Heart right ventricle (tissue), 16 donors: ENCODE measurements at regions of chr7 and their contacts with region 1.

Region 1: DNA sequence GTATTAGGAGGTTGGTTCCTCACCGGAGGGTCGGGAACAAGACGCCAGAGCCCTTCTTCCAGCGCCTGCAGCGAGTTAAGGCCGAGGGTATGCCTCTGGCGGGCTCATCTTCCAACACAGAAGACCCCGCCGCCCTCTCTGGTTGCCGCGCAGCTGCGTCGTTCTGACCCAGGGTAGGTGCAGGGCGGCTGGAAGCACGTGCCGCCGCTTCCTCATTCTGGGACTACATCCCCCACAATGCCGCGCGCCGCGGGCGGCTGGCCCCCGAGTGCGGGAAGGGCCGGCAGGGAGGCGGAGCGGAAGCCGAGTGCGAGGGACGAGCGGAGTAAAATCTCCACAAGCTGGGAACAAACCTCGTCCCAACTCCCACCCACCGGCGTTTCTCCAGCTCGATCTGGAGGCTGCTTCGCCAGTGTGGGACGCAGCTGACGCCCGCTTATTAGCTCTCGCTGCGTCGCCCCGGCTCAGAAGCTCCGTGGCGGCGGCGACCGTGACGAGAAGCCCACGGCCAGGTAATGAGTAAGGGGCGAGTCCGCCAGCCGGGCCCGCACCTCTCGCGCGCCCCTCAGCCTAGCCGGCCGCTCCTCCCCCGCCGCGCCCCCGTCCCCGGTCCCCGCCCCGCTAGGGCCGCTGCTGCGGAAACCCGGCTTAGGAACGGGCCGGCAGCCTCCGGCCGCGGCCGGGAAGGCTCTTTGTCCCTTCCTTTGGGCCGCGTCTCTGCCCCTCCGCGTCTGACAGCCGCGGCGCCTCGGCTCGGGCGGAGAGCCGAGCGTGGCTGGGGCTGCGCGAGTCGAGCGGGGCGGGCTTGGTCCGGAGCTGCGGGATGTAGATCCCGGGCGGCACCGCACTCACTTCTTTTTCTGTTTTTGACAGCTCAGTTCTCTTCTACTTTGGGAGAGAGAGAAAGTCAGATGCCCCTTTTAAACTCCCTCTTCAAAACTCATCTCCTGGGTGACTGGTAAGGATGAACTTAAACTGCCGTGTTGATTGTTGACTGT is at the start of gene CCDC126:
- DNase-seq: peak; percentile 93 to 94
- ATAC-seq: peak; percentile 98 to 99 (median 98)
- H3K4me3 ChIP-seq: peak within 1 kb of the TSS; percentile 70 to 89 (median 80)
- H3K27ac ChIP-seq: peak within 1 kb of the TSS; percentile 84 to 98 (median 96)
- H3K4me1 ChIP-seq: peaks cover 6 to 30% (median 14%) of the 10 kb centered on the region in 9 donors
- H3K27me3 ChIP-seq: no peaks in the 10 kb centered on the region
- CTCF ChIP-seq: no peak
- total RNA-seq, gene CCDC126: 6.7 to 11.9 (median 8.9) TPM

Region 2: DNA sequence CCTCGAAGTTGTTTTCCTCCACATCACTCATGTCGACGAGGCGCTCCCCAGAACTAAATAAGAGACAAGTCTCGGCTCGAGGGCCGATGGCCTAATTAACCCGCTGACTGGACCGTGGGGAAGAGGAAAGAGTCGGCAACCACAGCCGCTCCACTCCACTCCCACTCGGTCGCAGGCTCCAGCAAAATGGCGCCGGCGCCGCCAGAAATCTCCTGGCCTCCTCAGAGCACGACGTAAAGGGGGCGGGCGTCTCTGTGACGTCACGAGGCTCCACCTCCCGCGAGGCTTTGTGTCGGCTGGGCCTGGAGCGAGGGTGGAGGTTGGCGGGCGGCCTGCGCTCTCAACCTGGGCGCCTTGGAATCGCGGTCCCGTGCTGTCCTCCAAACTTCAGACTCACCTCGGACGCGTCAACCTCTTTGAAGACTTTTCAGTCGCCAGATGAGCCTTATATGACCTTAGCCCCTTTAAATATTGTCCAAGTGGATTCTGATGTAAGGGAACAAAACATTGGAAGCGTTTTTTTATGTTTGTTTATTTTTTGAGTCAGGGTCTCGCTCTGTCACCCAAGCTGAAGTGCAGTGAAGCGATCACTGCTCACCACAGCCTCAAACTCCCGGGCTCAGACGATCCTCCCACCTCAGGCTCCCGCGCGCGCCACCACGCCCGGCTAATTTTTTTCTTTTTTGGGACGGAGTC is 65.5 kb before region 1 on chr7 and contains the start of gene TRA2A:
- intact Hi-C with region 1: loop called in 1 of 10 experiments (anchors 5 kb)
- DNase-seq: peak; percentile 97 to 98
- ATAC-seq: peak; percentile 99
- H3K4me3 ChIP-seq: peak within 1 kb of the TSS; percentile 60 to 98 (median 87)
- H3K27ac ChIP-seq: peak within 1 kb of the TSS; percentile 81 to 98 (median 96)
- H3K4me1 ChIP-seq: peaks cover 0 to 41% (median 37%) of the 10 kb centered on the region in 9 donors
- H3K27me3 ChIP-seq: no peaks in the 10 kb centered on the region
- CTCF ChIP-seq: no peak
- total RNA-seq, gene TRA2A: 26.9 to 38.3 (median 31.2) TPM

Region 3: GRCh38 chr7:23679898-23680413 is 82.6 kb after region 1 on chr7 and contains the start of gene FAM221A:
- intact Hi-C with region 1: loop called in 7 of 10 experiments (anchors 1 to 10 kb)
- DNase-seq: peak; percentile 89 to 91
- ATAC-seq: peak; percentile 98 to 100 (median 99)
- H3K4me3 ChIP-seq: peak within 1 kb of the TSS; percentile 63 to 94 (median 77)
- H3K27ac ChIP-seq: peak within 1 kb of the TSS; percentile 26 to 86 (median 80)
- H3K4me1 ChIP-seq: peaks cover 0 to 12% (median 7%) of the 10 kb centered on the region in 9 donors
- H3K27me3 ChIP-seq: no peaks in the 10 kb centered on the region
- CTCF ChIP-seq: peak; percentile 68 to 89 (median 80)
- total RNA-seq, gene FAM221A: 1.4 to 5.8 (median 4.2) TPM